Calu3 (cell line): ENCODE measurements at regions of chr20 and their contacts with region 1.

Region 1: GRCh38 chr20:53578492-53579222 is 15.0 kb downstream of the ZNF217 start:
- DNase-seq: peak; percentile 81
- H3K4me3 Mint-ChIP-seq: peak overlapping the region; percentile 63
- H3K27ac Mint-ChIP-seq: peak overlapping the region; percentile 80
- H3K4me1 Mint-ChIP-seq: peaks cover 60% of the 10 kb centered on the region
- H3K27me3 Mint-ChIP-seq: no peaks in the 10 kb centered on the region
- CTCF ChIP-seq: peak; percentile 95

Region 2: GRCh38 chr20:53623454-53624211 is 45.0 kb after region 1 on chr20:
- CTCF ChIA-PET with region 1: interaction called, 3 read pairs
- intact Hi-C with region 1: loop called (anchors 1 kb)
- DNase-seq: peak; percentile 71
- H3K4me3 Mint-ChIP-seq: peak overlapping the region; percentile 67
- H3K27ac Mint-ChIP-seq: peak overlapping the region; percentile 99
- H3K4me1 Mint-ChIP-seq: peaks cover 40% of the 10 kb centered on the region
- H3K27me3 Mint-ChIP-seq: no peaks in the 10 kb centered on the region
- CTCF ChIP-seq: no peak

Region 3: DNA sequence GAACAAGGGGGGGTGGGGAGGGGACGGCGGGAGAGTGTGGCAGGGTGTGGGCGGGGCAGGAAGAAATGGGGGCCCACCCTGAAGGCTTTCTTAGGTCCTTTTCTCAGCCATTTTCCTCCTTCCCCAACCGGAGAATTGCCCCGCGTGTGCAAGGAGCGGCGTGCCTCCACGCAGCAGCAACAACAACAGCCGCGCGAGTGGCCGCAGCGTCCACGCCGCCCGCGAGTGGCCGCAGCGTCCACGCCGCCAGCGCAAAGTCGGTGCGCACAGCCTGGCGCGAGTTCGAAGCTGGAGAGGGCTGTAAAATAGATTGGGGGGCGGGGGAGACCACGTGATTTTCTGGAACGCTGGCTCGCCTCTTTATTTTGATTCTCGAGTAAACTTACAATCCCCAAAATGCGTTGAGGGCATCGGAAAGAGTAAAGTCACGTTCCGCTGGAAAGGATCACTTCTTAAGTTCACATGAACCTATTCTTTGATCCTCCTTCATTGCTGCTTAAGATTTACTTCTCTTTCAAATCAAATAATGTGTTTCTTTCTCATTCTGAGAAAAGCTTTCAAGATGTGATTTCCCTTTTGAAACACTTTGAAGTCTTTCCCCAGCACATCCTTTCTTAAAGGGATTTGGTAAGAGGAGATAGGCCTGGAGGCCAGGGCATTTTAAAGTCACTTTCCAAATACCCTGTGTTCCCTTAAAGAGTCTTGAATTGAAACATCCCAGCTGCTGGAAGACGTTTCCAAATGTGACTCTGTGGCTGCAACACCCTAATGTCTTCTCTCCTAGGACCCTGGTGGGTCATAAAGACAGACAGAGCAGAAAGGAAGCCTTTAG is 81.6 kb after region 1 on chr20:
- CTCF ChIA-PET with region 1: no interaction called
- intact Hi-C with region 1: loop called (anchors 2 kb)
- DNase-seq: no peak
- H3K4me3 Mint-ChIP-seq: peak overlapping the region; percentile 64
- H3K27ac Mint-ChIP-seq: no peak overlapping the region
- H3K4me1 Mint-ChIP-seq: peaks cover 34% of the 10 kb centered on the region
- H3K27me3 Mint-ChIP-seq: no peaks in the 10 kb centered on the region
- CTCF ChIP-seq: no peak

Region 4: GRCh38 chr20:53828682-53829254 is 250.1 kb after region 1 on chr20:
- CTCF ChIA-PET with region 1: no interaction called
- intact Hi-C with region 1: loop called (anchors 2 kb)
- DNase-seq: peak; percentile 27
- H3K4me3 Mint-ChIP-seq: peak overlapping the region; percentile 64
- H3K27ac Mint-ChIP-seq: peak overlapping the region; percentile 98
- H3K4me1 Mint-ChIP-seq: peaks cover 55% of the 10 kb centered on the region
- H3K27me3 Mint-ChIP-seq: no peaks in the 10 kb centered on the region
- CTCF ChIP-seq: no peak

Region 5: DNA sequence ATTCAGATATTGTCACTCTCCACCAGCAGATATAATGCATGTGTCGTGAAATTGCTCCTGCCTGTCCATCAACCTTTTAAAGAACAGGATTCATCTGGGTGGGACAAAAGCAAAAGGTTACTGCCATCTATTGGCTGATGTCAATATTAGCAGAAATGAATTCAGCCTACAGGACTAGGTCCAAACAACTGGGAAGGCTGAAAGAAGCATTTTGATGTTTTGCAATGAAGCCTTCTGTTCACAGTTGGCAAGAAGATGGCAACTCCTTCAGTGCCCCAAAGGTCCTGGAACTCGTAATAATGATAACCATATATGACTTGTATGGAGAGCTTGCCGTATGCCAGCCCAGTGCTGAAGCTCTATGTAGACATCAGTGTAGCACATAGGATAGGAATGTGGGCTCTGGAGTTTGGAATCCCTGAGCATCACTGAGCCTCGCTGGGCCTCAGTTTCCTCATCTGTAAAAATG is 484.2 kb after region 1 on chr20:
- CTCF ChIA-PET with region 1: no interaction called
- intact Hi-C with region 1: loop called (anchors 2 kb)
- DNase-seq: peak; percentile 33
- H3K4me3 Mint-ChIP-seq: no peak overlapping the region
- H3K27ac Mint-ChIP-seq: no peak overlapping the region
- H3K4me1 Mint-ChIP-seq: peaks cover 22% of the 10 kb centered on the region
- H3K27me3 Mint-ChIP-seq: no peaks in the 10 kb centered on the region
- CTCF ChIP-seq: peak; percentile 69